Right ventricle myocardium inferior (tissue), 1 donor: ENCODE measurements at regions of chr15 and their contacts with region 1.

Region 1: GRCh38 chr15:76866716-76867321 is 38.3 kb downstream of the SCAPER start:
- DNase-seq: no peak
- ATAC-seq: peak; percentile 64

Region 2: DNA sequence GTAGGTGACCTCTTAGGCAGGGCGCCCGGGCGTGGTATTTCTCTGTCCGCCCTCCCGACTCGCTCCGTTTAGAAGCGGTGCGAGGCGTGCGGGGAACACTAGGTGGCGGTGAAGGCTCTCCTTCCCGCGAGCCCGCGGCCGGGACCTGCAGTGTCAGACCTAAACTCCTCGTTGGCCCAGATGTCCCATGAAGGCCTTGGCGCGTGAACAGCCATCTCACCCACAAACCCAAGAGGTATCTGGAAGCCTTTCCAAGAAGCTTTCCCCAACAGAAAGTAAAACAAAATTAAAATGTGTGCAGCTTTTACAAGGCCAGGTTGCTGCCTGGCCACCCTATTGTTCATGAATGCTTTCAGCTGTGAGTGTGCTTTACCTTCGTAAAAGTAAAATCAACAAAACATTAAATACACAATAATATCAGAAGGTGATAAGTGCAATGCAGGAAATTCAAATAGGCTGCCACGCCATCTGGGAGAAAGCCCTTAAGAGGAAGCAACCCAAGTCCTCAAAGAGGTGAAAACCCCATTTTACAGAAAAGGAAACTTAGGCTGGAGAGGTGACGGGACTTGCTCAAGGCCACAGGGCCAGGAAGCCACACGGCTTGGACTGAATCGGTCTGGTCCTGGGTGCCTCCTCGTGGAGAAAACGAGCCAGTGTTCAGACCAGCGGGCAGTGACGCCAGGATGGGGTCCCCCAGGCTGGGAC is 675.8 kb before region 1 on chr15:
- intact Hi-C with region 1: loop called (anchors 10 kb)
- DNase-seq: peak; percentile 89
- ATAC-seq: peak; percentile 90

Region 3: GRCh38 chr15:76576523-76577279 is 290.1 kb before region 1 on chr15:
- intact Hi-C with region 1: loop called (anchors 10 kb)
- DNase-seq: peak; percentile 85
- ATAC-seq: peak; percentile 95

Region 4: DNA sequence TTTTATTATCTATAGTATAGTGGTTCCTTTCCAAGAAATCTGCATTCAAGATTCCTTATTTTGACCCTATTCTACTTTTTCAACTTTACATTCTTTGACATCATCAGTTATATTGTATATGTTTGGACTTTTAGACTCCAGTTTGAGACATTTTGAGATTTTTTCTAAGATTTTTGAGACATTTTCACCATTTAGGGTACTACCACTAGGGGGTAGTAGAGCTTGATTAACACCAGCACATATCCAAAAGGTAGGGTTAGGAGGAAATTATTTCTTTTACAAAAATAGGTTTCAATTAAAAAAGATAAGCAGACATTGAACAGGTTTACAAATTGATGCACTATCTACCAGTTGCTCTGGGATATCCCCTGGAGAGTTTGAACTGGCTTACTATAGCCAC is 224.1 kb before region 1 on chr15:
- intact Hi-C with region 1: loop called (anchors 10 kb)
- DNase-seq: no peak
- ATAC-seq: no peak

Region 5: GRCh38 chr15:76763554-76763953 is 103.3 kb before region 1 on chr15:
- intact Hi-C with region 1: no loop called
- DNase-seq: no peak
- ATAC-seq: no peak

Region 6: DNA sequence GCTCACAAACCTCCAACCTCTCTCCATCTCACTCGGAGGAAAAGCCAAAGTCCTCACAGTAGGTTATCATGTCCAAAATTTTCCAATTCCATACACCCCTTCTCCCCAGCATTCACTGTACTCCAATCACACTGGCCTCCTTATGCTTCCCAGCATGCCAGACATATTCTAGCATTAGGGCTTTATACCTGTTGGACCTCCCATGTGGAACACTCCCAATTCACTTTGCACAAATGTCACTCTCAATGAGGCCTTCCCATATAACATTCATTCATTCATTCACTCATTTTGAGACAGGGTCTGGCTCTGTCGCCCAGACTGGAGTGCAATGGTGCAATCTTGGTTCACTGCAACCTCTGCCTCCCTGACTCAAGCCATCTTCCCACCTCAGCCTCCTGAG is 18.4 kb after region 1 on chr15:
- intact Hi-C with region 1: no loop called
- DNase-seq: no peak
- ATAC-seq: no peak